ENCODE measurements at regions of chr9 and their contacts with region 1.

Region 1: DNA sequence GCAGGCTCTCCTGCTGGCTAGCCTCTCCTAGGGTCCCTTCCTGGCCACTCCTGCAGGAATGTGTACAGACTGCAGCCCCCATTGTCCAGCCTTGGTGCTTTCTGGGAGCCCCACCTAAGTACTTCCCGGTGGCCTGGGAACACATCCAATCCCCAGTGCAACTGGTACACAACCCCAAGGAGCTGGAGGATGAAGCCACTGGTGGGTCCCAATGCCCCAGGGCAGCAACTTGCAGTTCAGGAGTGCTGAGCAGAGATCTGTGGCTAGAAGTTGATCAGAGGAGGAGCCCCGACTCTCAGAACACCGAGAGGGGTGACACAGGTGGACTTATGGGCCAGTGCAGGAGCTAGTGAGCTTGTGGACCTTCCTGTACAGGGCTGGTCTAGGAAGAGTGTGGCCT is 1093.7 kb upstream of the ACO1 start:
- DNase-seq: peak in 1 of 5 donors; percentile 20
- ATAC-seq: no peak
- H3K4me3 ChIP-seq: no peak overlapping the region
- H3K27ac ChIP-seq: no peak overlapping the region
- H3K4me1 ChIP-seq: no peaks in the 10 kb centered on the region
- H3K27me3 ChIP-seq: no peaks in the 10 kb centered on the region
- CTCF ChIP-seq: no peak
- POLR2A ChIP-seq: no peak

Region 2: GRCh38 chr9:31236344-31236743 is 54.4 kb before region 1 on chr9:
- intact Hi-C with region 1: loop called in 1 of 10 experiments (anchors 10 kb)
- DNase-seq: no peak
- ATAC-seq: no peak
- H3K4me3 ChIP-seq: no peak overlapping the region
- H3K27ac ChIP-seq: no peak overlapping the region
- H3K4me1 ChIP-seq: peaks cover 0 to 2% (median 0%) of the 10 kb centered on the region in 12 donors
- H3K27me3 ChIP-seq: no peaks in the 10 kb centered on the region
- CTCF ChIP-seq: no peak
- POLR2A ChIP-seq: no peak

Measured in heart left ventricle (tissue), 16 donors.